ENCODE measurements at regions of chr12 and their contacts with region 1.

Region 1: DNA sequence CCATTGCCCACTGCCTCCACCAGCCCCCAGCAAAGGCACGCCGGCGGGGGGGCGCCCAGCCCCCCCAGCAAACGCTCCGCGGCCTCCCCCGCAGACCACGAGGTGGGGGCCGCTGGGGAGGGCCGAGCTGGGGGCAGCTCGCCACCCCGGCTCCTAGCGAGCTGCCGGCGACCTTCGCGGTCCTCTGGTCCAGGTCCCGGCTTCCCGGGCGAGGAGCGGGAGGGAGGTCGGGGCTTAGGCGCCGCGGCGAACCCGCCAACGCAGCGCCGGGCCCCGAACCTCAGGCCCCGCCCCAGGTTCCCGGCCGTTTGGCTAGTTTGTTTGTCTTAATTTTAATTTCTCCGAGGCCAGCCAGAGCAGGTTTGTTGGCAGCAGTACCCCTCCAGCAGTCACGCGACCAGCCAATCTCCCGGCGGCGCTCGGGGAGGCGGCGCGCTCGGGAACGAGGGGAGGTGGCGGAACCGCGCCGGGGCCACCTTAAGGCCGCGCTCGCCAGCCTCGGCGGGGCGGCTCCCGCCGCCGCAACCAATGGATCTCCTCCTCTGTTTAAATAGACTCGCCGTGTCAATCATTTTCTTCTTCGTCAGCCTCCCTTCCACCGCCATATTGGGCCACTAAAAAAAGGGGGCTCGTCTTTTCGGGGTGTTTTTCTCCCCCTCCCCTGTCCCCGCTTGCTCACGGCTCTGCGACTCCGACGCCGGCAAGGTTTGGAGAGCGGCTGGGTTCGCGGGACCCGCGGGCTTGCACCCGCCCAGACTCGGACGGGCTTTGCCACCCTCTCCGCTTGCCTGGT is at the start of gene CDKN1B:
- DNase-seq: peak; percentile 75
- ATAC-seq: peak; percentile 70
- H3K4me3 Mint-ChIP-seq: peak within 1 kb of the TSS; percentile 98
- H3K27ac Mint-ChIP-seq: peak within 1 kb of the TSS; percentile 97
- H3K4me1 Mint-ChIP-seq: peaks cover 67% of the 10 kb centered on the region
- H3K27me3 Mint-ChIP-seq: no peaks in the 10 kb centered on the region
- CTCF ChIP-seq: no peak
- total RNA-seq, gene CDKN1B: 56.6 and 59.0 TPM in 2 replicates

Region 2: DNA sequence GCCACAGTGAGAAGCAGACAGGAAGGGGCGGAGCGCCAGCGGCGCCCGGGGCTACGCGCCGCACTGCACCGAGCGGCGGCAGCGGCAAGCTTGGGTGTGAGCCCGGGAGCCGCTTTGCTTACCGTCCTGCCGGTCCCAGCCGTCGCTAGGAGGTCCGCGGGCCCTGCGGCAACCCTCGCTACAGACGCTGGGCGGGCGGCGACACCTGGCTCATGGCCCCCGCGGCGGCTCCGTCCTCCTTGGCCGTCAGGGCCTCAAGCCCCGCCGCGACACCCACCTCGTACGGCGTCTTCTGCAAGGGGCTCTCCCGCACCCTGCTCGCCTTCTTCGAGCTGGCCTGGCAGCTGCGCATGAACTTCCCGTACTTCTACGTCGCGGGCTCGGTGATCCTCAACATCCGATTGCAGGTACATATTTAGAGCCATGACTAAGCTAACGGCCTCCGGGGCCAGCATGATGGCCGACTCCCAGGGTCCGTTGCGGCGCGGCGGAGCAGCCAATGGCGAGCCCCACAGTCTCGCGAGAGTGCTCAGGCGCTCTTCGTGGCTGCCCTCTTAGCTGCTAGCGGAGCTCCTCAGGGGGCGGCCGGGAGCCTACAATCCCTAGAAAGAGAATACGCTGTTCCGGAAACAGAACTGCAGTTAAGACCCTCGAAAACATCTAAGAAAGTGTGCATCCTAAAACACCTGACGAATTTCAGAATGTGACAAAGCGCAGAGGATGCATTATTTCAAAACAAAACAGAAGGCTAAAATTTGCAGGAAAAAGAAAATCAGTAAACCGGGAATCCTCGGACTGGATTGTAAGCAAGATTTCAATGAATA is 1545.6 kb before region 1 on chr12 and contains the start of gene SMIM10L1:
- CTCF ChIA-PET with region 1: no interaction called
- POLR2A ChIA-PET with region 1: no interaction called
- intact Hi-C with region 1: loop called (anchors 5 kb)
- DNase-seq: peak; percentile 75
- ATAC-seq: peak; percentile 96
- H3K4me3 Mint-ChIP-seq: peak within 1 kb of the TSS; percentile 97
- H3K27ac Mint-ChIP-seq: peak within 1 kb of the TSS; percentile 95
- H3K4me1 Mint-ChIP-seq: peaks cover 52% of the 10 kb centered on the region
- H3K27me3 Mint-ChIP-seq: no peaks in the 10 kb centered on the region
- CTCF ChIP-seq: no peak
- total RNA-seq, gene SMIM10L1: 7.3 and 8.8 TPM in 2 replicates

Region 3: GRCh38 chr12:12645485-12645884 is 71.5 kb before region 1 on chr12:
- CTCF ChIA-PET with region 1: interaction called, 10 read pairs
- POLR2A ChIA-PET with region 1: interaction called, 8 read pairs
- intact Hi-C with region 1: loop called (anchors 5 kb)
- DNase-seq: no peak
- ATAC-seq: peak; percentile 92
- H3K4me3 Mint-ChIP-seq: no peak overlapping the region
- H3K27ac Mint-ChIP-seq: no peak overlapping the region
- H3K4me1 Mint-ChIP-seq: peaks cover 9% of the 10 kb centered on the region
- H3K27me3 Mint-ChIP-seq: no peaks in the 10 kb centered on the region
- CTCF ChIP-seq: no peak

Region 4: GRCh38 chr12:12696562-12697383 is 20.2 kb before region 1 on chr12:
- CTCF ChIA-PET with region 1: interaction called, 5 read pairs
- POLR2A ChIA-PET with region 1: interaction called, 280 read pairs
- intact Hi-C with region 1: loop called (anchors 1 kb)
- DNase-seq: peak; percentile 78
- ATAC-seq: peak; percentile 80
- H3K4me3 Mint-ChIP-seq: peak overlapping the region; percentile 96
- H3K27ac Mint-ChIP-seq: peak overlapping the region; percentile 99
- H3K4me1 Mint-ChIP-seq: peaks cover 33% of the 10 kb centered on the region
- H3K27me3 Mint-ChIP-seq: no peaks in the 10 kb centered on the region
- CTCF ChIP-seq: no peak

Region 5: GRCh38 chr12:12704593-12705230 is 12.3 kb before region 1 on chr12:
- CTCF ChIA-PET with region 1: interaction called, 6 read pairs
- POLR2A ChIA-PET with region 1: interaction called, 280 read pairs
- intact Hi-C with region 1: loop called (anchors 1 kb)
- DNase-seq: no peak
- ATAC-seq: peak; percentile 87
- H3K4me3 Mint-ChIP-seq: no peak overlapping the region
- H3K27ac Mint-ChIP-seq: no peak overlapping the region
- H3K4me1 Mint-ChIP-seq: peaks cover 9% of the 10 kb centered on the region
- H3K27me3 Mint-ChIP-seq: no peaks in the 10 kb centered on the region
- CTCF ChIP-seq: no peak

Region 6: DNA sequence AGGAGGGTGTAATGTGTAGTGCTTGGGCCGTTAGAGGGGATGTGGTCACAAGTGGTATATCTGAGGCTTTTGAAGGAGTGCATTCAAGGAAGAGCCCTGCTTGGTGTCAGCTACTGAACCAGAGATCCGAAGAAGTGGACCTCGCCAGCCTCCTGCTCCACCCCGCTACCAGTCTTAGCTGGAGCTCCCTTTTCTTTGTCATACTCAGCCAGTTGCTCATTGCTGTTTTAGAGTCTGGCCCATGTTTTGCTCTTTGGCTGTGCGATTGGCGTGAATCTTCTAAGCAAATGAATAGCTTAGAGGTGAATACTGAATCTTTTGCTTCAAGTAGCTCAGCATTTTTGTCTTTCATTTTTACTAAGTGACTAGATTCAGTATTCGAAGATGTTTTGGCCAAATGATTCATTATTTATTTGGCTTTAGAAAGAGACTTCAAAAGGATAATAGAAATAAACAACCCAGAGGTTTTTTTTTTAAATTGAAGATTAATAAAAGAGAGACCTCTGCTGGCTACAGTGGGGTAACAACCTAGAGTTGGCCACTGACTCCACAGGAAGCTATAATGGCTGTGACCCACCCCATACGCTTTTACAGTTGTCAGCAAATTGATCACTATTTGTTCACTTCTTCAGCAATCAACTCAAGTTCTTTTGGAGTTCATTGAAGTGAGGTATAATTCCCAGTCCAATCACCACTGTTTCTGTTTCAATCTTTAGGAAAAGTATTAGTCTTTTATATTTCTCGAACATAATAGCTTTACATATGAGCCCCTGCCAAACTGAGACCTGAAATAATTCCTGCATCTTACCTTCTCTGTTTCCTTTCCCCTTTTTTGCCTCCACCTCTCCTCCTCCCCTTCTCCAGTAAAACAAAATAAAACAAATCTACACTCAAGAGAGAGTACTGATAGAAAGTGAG is 20.0 kb after region 1 on chr12:
- CTCF ChIA-PET with region 1: interaction called, 24 read pairs
- POLR2A ChIA-PET with region 1: interaction called, 70 read pairs
- intact Hi-C with region 1: loop called (anchors 1 kb)
- DNase-seq: peak; percentile 19
- ATAC-seq: peak; percentile 91
- H3K4me3 Mint-ChIP-seq: peak overlapping the region; percentile 30
- H3K27ac Mint-ChIP-seq: peak overlapping the region; percentile 72
- H3K4me1 Mint-ChIP-seq: peaks cover 13% of the 10 kb centered on the region
- H3K27me3 Mint-ChIP-seq: no peaks in the 10 kb centered on the region
- CTCF ChIP-seq: peak; percentile 19

Region 7: DNA sequence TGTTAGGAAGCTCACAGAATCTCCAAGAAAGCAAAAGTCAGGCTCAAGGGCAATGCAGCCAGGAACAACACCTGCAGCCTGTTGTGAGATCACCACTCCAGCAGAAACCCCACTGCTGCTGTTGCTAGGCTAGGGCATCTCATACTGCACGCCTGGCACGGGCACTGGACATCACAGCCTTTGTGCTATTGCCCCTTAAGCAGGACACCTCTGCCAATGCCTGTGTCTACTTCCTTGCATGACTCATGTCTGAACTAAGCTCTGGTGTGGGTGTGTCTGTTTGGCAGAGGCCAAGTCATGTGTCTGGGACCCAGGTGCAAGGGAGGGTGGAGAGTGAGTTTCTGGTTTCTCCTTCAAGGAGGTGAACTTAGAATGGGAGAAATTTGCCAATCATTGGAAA is 86.2 kb after region 1 on chr12:
- CTCF ChIA-PET with region 1: no interaction called
- POLR2A ChIA-PET with region 1: interaction called, 8 read pairs
- intact Hi-C with region 1: loop called (anchors 2 kb)
- DNase-seq: no peak
- ATAC-seq: peak; percentile 70
- H3K4me3 Mint-ChIP-seq: peak overlapping the region; percentile 12
- H3K27ac Mint-ChIP-seq: peak overlapping the region; percentile 6
- H3K4me1 Mint-ChIP-seq: peaks cover 65% of the 10 kb centered on the region
- H3K27me3 Mint-ChIP-seq: no peaks in the 10 kb centered on the region
- CTCF ChIP-seq: no peak

Region 8: DNA sequence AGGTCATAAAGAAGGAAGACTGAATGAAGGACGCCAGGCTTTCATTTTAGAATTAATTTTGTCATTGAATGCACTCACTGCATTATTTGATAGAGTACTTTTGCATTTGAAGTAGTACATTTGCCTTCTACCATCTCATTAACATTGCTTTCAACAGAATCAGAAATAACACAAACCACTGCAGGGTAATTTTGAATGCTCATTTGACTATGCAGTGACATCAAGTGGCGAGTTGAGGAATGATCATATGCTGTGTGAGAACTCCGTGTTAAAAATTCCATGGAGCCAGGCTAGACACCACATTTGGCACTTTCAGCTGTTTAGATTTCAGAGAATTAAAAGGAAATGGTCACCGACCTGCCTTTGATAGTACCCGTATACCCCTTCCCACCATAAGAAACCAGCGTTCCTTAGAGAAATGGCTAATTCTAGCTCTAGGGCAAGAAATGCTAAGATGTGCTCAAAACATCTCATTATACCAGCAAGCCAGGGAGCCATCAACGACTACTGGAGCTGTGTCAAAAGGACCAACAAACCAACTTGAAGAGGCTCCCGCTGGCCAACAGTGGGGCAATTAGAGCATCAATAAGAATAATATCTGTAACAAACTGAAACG is 266.5 kb after region 1 on chr12:
- CTCF ChIA-PET with region 1: no interaction called
- POLR2A ChIA-PET with region 1: no interaction called
- intact Hi-C with region 1: no loop called
- DNase-seq: no peak
- ATAC-seq: no peak
- H3K4me3 Mint-ChIP-seq: no peak overlapping the region
- H3K27ac Mint-ChIP-seq: no peak overlapping the region
- H3K4me1 Mint-ChIP-seq: no peaks in the 10 kb centered on the region
- H3K27me3 Mint-ChIP-seq: no peaks in the 10 kb centered on the region
- CTCF ChIP-seq: no peak

Measured in activated B cell treated with CpG ODN at 0.5 μM for 24 hours (primary cell).